ENCODE measurements at regions of chr2 and their contacts with region 1.

Region 1: GRCh38 chr2:101419096-101419663 is 31.9 kb upstream of the CREG2 start:
- DNase-seq: peak in 2 of 10 donors; percentile 32 to 42

Region 2: GRCh38 chr2:101518578-101519492 is 99.7 kb after region 1 on chr2:
- intact Hi-C with region 1: loop called (anchors 10 kb)
- DNase-seq: peak; percentile 28 to 92 (median 67)

Region 3: DNA sequence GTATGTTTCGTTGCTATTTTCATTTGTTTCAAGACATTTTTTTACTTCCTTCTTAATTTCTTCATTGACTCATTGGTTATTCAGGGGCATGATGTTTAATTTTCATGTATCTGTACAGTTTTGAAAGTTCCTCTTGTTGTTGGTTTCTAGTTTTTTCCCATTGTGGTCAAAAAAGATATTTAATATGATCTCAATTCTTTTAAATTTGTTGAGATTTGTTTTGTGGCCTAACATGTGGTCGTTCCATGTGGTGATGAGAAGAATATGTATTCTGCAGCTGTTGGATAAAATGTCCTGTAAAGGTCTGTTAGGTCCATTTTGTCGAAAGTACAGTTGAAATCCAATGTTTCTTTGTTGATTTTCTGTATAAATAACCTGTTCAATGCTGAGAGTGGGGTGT is 168.1 kb after region 1 on chr2:
- intact Hi-C with region 1: no loop called
- DNase-seq: no peak

Region 4: DNA sequence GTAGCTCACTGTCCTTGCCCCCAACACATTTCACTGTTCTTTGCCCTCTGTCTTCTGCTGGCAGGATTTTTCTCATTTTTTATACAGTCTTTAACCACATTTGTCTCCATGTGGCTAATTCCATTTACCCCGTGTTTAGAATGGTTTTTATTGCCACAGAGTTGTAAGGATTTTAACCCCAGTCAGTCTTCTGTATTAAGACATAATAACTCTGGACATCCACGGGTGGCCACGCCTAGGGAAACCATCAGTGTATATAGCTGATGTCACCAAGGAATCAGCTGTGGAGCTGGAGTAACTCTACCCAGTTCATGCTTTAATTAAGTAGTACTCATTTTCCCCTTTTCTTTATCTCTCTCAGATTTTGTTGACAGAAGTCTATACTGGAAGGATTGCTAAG is 418.2 kb after region 1 on chr2:
- intact Hi-C with region 1: loop called (anchors 5 kb)
- DNase-seq: no peak

Measured in posterior cingulate gyrus (tissue), 11 donors.